Uterus (tissue), 4 donors: ENCODE measurements at regions of chr1 and their contacts with region 1.

Region 1: GRCh38 chr1:51192213-51192843 is 43.7 kb upstream of the RNF11 start:
- DNase-seq: peak; percentile 47 to 71
- H3K4me3 ChIP-seq: no peak overlapping the region
- H3K27ac ChIP-seq: no peak overlapping the region
- H3K4me1 ChIP-seq: no peaks in the 10 kb centered on the region
- H3K27me3 ChIP-seq: no peaks in the 10 kb centered on the region
- CTCF ChIP-seq: peak; percentile 64 to 77 (median 67)
- POLR2A ChIP-seq: no peak

Region 2: DNA sequence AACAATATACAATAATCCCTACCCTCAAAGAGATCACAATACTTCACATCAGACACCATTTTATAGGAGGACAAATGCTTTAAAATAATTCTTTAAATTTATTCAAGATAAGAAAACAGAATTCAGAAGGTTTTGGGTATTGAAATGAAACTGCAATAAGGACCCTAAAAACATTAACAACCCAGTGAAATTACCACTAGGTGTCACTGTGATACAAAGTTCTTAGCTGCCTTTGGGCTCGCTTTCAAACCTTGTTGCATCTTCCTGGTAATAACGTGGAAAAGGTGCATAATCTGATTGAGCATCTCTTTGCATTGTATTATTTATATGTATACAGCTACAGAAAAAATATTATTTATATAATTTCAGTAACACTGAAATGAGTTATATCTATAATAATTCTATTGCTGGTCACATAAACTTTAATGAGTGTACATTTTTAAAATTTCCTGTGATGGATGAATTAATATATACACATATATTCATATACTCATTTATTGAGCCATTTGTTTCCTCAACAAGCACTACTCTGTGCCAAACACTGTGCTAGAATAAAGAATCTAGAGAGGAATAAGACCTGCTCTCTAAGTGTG is 417.5 kb before region 1 on chr1:
- intact Hi-C with region 1: loop called (anchors 10 kb)
- DNase-seq: no peak
- H3K4me3 ChIP-seq: no peak overlapping the region
- H3K27ac ChIP-seq: no peak overlapping the region
- H3K4me1 ChIP-seq: no peaks in the 10 kb centered on the region
- H3K27me3 ChIP-seq: no peaks in the 10 kb centered on the region
- CTCF ChIP-seq: peak; percentile 64 to 74 (median 68)
- POLR2A ChIP-seq: no peak

Region 3: GRCh38 chr1:50893466-50893865 is 298.9 kb before region 1 on chr1:
- intact Hi-C with region 1: no loop called
- DNase-seq: no peak
- H3K4me3 ChIP-seq: no peak overlapping the region
- H3K27ac ChIP-seq: no peak overlapping the region
- H3K4me1 ChIP-seq: no peaks in the 10 kb centered on the region
- H3K27me3 ChIP-seq: no peaks in the 10 kb centered on the region
- CTCF ChIP-seq: no peak
- POLR2A ChIP-seq: no peak

Region 4: DNA sequence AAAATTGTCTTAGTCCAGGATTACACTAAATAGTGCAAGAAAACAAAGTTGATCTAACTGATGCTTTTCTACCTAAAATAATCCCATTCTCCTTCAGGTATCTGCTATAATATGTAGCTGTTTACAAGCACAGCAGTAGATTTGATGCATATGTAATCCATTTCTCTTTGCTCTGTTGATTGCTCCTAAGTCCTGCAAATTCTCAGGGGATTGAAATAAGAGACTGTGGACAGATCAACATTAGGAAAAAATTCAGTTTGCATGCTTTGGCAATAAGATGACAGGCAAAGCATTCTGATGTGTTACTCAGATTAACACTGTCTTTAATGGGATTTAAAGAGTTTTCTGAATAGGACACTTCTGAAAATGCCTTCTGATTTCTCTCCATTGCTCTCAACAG is 78.4 kb after region 1 on chr1:
- intact Hi-C with region 1: loop called (anchors 10 kb)
- DNase-seq: no peak
- H3K4me3 ChIP-seq: no peak overlapping the region
- H3K27ac ChIP-seq: no peak overlapping the region
- H3K4me1 ChIP-seq: no peaks in the 10 kb centered on the region
- H3K27me3 ChIP-seq: no peaks in the 10 kb centered on the region
- CTCF ChIP-seq: no peak
- POLR2A ChIP-seq: no peak